ENCODE measurements at regions of chr4 and their contacts with region 1.

Region 1: GRCh38 chr4:52712172-52712990 is 38.8 kb downstream of the ERVMER34-1 start:
- DNase-seq: peak; percentile 98
- ATAC-seq: peak; percentile 96
- H3K4me3 Mint-ChIP-seq: peak overlapping the region; percentile 90
- H3K27ac Mint-ChIP-seq: peak overlapping the region; percentile 99
- H3K4me1 Mint-ChIP-seq: peaks cover 43% of the 10 kb centered on the region
- H3K27me3 Mint-ChIP-seq: no peaks in the 10 kb centered on the region

Region 2: DNA sequence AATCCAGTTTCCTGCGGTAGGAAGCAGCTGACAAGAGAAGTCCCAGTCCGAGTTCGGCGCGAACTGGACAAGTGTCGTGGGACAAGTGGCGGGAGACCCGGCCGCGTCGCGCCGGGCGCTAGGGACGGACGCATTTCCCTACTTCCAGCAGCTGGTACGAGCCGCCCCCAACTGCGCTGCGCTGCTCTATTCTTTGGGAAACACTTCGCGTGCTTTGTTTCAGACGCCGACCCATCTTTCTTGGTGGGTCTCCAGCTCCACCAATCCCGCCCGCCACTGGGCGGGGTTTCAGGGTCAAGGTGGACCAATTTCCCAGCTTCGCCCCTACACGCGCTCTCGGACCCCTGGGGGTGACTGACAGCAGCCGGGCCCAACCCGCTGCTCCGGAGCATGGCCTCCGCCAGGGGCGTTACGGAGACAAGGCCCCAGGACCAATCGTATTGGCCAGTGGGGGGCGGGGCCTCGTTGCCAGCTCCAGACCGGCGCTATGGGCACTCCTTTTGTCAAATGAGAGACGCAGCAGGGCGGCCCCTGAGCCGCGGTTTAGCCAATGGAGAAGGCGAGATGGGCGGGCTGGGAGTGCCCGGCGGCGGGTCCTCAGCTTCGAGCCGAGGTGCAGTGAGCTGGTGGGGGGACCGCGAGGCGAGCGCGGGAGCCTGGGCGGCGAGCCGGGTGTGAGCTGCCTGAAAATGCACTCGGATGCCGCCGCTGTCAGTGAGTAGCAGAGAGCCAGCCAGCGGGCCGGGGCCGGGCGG is 869.6 kb before region 1 on chr4 and contains the start of gene DCUN1D4:
- CTCF ChIA-PET with region 1: no interaction called
- POLR2A ChIA-PET with region 1: interaction called, 3 read pairs
- intact Hi-C with region 1: loop called in 1 of 2 experiments (anchors 2 kb)
- DNase-seq: peak; percentile 99
- ATAC-seq: peak; percentile 92
- H3K4me3 Mint-ChIP-seq: peak within 1 kb of the TSS; percentile 84
- H3K27ac Mint-ChIP-seq: peak within 1 kb of the TSS; percentile 90
- H3K4me1 Mint-ChIP-seq: peaks cover 18% of the 10 kb centered on the region
- H3K27me3 Mint-ChIP-seq: no peaks in the 10 kb centered on the region
- total RNA-seq, gene DCUN1D4: 31.2 to 41.2 TPM

Region 3: GRCh38 chr4:52059372-52059771 is 653.0 kb before region 1 on chr4:
- CTCF ChIA-PET with region 1: no interaction called
- POLR2A ChIA-PET with region 1: no interaction called
- intact Hi-C with region 1: no loop called
- DNase-seq: no peak
- ATAC-seq: no peak
- H3K4me3 Mint-ChIP-seq: no peak overlapping the region
- H3K27ac Mint-ChIP-seq: no peak overlapping the region
- H3K4me1 Mint-ChIP-seq: no peaks in the 10 kb centered on the region
- H3K27me3 Mint-ChIP-seq: peaks cover 17% of the 10 kb centered on the region

Region 4: GRCh38 chr4:52659001-52659721 is 53.2 kb before region 1 on chr4 and contains the start of gene USP46:
- CTCF ChIA-PET with region 1: no interaction called
- POLR2A ChIA-PET with region 1: interaction called, 3 read pairs
- intact Hi-C with region 1: loop called (anchors 1 to 5 kb)
- DNase-seq: peak; percentile 74
- ATAC-seq: peak; percentile 86
- H3K4me3 Mint-ChIP-seq: peak within 1 kb of the TSS; percentile 80
- H3K27ac Mint-ChIP-seq: peak within 1 kb of the TSS; percentile 78
- H3K4me1 Mint-ChIP-seq: peaks cover 18% of the 10 kb centered on the region
- H3K27me3 Mint-ChIP-seq: peaks cover 12% of the 10 kb centered on the region
- total RNA-seq, gene USP46: 4.3 to 5.4 TPM

Region 5: GRCh38 chr4:52861879-52862616 is 149.7 kb after region 1 on chr4 and contains the start of gene RASL11B:
- CTCF ChIA-PET with region 1: no interaction called
- POLR2A ChIA-PET with region 1: interaction called, 4 read pairs
- intact Hi-C with region 1: loop called in 1 of 2 experiments (anchors 1 kb)
- DNase-seq: peak; percentile 91
- ATAC-seq: peak; percentile 99
- H3K4me3 Mint-ChIP-seq: peak within 1 kb of the TSS; percentile 63
- H3K27ac Mint-ChIP-seq: peak within 1 kb of the TSS; percentile 73
- H3K4me1 Mint-ChIP-seq: peaks cover 9% of the 10 kb centered on the region
- H3K27me3 Mint-ChIP-seq: peaks cover 30% of the 10 kb centered on the region
- total RNA-seq, gene RASL11B: 0.23 to 0.25 TPM

Region 6: GRCh38 chr4:53132132-53132896 is 419.9 kb after region 1 on chr4:
- CTCF ChIA-PET with region 1: no interaction called
- POLR2A ChIA-PET with region 1: no interaction called
- intact Hi-C with region 1: loop called (anchors 2 to 10 kb)
- DNase-seq: peak; percentile 49
- ATAC-seq: peak; percentile 83
- H3K4me3 Mint-ChIP-seq: no peak overlapping the region
- H3K27ac Mint-ChIP-seq: peak overlapping the region; percentile 88
- H3K4me1 Mint-ChIP-seq: peaks cover 34% of the 10 kb centered on the region
- H3K27me3 Mint-ChIP-seq: no peaks in the 10 kb centered on the region

Region 7: DNA sequence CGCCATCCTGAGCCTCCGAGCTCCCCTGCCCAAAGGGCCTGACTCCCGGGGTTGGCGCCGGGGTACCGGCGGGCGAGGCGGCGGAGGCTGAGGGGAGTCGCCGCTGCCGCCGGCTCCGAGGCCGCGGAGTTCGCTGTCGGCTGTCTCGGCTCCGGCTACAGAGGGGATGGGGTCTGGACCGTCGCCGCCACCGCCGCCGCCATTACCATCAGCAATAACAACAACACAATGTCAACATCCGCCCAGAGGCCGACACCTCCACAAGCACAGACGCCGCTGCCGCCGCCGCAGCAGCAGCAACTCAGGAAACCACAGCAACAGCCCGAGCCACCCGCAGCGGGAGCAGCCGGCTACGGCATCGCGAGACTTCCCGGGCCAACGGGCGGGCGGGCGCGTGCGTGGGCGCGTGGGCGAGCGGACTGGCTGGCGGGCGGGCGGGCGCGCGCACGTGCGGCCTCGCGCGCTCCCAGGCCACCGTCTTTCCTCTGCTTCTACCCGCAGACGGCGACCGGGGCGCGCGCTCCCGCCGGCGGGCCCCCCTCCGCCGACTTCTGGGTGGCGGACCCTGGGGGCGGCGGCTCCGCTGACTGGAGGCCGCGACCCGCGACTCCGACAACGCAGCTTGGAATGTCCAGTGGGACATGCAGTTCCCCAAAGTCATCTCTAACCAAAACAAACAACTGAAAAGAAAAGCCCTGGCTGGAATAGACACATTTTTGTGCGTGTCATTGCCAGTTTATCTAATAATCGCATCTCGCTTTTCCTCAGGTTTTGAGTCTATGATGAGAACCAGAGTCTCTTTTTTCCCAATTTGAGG is 1352.1 kb after region 1 on chr4 and contains the start of gene CHIC2:
- CTCF ChIA-PET with region 1: no interaction called
- POLR2A ChIA-PET with region 1: interaction called, 3 read pairs
- intact Hi-C with region 1: loop called in 1 of 2 experiments (anchors 2 kb)
- DNase-seq: peak; percentile 98
- ATAC-seq: peak; percentile 84
- H3K4me3 Mint-ChIP-seq: peak within 1 kb of the TSS; percentile 94
- H3K27ac Mint-ChIP-seq: peak within 1 kb of the TSS; percentile 94
- H3K4me1 Mint-ChIP-seq: peaks cover 41% of the 10 kb centered on the region
- H3K27me3 Mint-ChIP-seq: no peaks in the 10 kb centered on the region
- total RNA-seq, gene CHIC2: 14.7 to 17.7 TPM

Measured in activated CD4-positive, alpha-beta T cell treated with anti-CD3 and anti-CD28 coated beads for 36 hours (primary cell).